Activated CD4-positive, alpha-beta T cell treated with anti-CD3 and anti-CD28 coated beads for 36 hours (primary cell): ENCODE measurements at regions of chrX and their contacts with region 1.

Region 1: DNA sequence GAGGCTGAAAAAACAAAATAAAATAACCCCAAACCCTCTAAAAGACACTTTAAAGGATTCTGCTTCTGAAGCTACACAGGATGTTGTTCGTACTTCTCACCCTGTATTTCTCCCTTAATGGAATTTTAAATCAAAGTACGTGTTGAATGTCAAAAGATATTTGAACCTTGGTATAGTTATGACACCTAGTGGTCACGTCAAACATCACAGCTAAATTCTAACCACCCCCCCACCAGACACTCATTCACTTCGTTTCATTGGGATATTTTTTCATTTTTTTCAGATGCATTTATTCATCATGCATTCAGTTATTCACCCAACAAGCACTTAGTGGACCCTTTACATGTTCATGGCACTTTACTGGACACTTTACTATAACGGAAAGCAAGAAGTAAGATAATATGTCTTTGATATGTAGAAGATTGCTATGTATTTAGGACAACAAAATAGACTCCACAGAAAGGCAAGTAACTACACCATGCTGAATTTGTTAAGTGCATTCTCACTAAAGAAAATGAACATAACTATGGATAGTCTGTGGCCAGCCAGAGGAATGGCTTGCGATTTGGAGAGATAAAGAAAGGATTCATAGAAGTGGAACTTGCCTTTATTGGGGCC is 62.5 kb upstream of the GPR174 start:
- DNase-seq: peak; percentile 29
- ATAC-seq: peak; percentile 53
- H3K4me3 Mint-ChIP-seq: peak overlapping the region; percentile 47
- H3K27ac Mint-ChIP-seq: peak overlapping the region; percentile 71
- H3K4me1 Mint-ChIP-seq: peaks cover 37% of the 10 kb centered on the region
- H3K27me3 Mint-ChIP-seq: no peaks in the 10 kb centered on the region

Region 2: DNA sequence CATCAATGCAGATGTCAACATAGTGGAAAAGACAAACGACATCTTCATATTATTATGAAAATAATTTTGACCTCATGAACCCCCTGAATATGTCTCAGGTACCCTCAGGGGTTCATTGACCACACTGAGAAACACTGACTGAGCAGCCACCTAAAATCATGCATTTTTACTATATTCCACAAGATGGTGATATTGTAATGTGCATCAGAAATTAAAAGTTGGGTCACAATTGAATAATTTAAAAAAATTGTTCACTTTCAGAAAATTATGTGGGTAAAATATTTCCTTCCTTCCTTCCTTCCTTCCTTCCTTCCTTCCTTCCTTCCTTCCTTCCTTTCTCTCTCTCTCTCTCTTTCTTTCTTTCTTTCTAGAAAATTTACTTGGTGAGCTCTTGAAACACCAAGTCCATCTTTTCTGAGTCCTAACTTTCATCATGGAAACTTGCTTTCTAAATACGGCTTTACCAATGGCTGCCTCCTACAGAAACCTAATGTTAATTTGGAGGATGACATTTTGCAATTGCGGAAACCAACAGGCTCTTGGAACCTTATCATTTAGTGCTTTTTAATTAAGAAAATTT is 526.5 kb before region 1 on chrX:
- CTCF ChIA-PET with region 1: interaction called, 10 read pairs
- POLR2A ChIA-PET with region 1: interaction called, 3 read pairs
- intact Hi-C with region 1: loop called (anchors 1 to 2 kb)
- DNase-seq: no peak
- ATAC-seq: no peak
- H3K4me3 Mint-ChIP-seq: no peak overlapping the region
- H3K27ac Mint-ChIP-seq: no peak overlapping the region
- H3K4me1 Mint-ChIP-seq: peaks cover 2% of the 10 kb centered on the region
- H3K27me3 Mint-ChIP-seq: no peaks in the 10 kb centered on the region

Region 3: DNA sequence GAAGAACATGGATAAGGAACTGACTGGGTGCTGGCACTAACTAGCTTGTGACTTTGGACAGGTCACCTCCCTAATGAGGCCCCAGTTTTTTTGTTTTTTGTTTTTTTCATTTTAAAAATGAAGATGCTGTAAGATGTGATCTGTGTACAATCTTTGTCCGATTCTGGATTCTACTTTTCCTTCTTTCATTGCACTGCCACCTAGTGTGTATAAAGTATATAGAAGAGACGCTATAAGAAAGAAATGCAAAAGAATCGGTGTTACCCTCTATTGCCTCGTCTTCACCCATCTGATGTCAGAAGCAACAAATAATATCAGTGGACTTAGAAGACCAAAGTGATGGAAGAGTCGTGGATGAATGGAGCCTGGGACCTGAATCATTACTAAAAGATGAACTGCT is 195.5 kb before region 1 on chrX:
- CTCF ChIA-PET with region 1: no interaction called
- POLR2A ChIA-PET with region 1: no interaction called
- intact Hi-C with region 1: loop called in 1 of 2 experiments (anchors 5 kb)
- DNase-seq: no peak
- ATAC-seq: peak; percentile 61
- H3K4me3 Mint-ChIP-seq: no peak overlapping the region
- H3K27ac Mint-ChIP-seq: peak overlapping the region; percentile 47
- H3K4me1 Mint-ChIP-seq: peaks cover 7% of the 10 kb centered on the region
- H3K27me3 Mint-ChIP-seq: no peaks in the 10 kb centered on the region

Region 4: GRCh38 chrX:78979789-78980464 is 102.1 kb before region 1 on chrX:
- CTCF ChIA-PET with region 1: no interaction called
- POLR2A ChIA-PET with region 1: no interaction called
- intact Hi-C with region 1: loop called in 1 of 2 experiments (anchors 5 kb)
- DNase-seq: peak; percentile 30
- ATAC-seq: peak; percentile 93
- H3K4me3 Mint-ChIP-seq: peak overlapping the region; percentile 60
- H3K27ac Mint-ChIP-seq: peak overlapping the region; percentile 94
- H3K4me1 Mint-ChIP-seq: peaks cover 20% of the 10 kb centered on the region
- H3K27me3 Mint-ChIP-seq: no peaks in the 10 kb centered on the region

Region 5: DNA sequence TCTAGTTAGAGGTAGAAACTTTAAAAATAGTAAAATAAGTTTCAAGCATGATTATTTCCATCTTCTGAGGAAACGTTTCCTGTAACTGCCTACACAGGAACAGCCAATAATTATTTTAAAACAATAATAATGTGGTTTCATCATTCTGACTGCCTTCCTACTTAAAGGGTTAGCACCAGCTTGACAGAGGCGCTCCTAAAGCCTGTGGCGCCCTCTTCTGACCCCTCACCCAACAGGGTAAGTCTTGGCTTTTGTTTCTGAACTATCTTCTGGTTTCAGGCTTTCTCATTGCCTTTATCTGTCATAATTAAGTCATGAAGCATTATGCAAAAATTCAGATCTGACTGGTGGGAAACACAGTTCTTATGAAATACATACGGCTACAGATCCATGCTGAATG is 188.4 kb after region 1 on chrX:
- CTCF ChIA-PET with region 1: interaction called, 5 read pairs
- POLR2A ChIA-PET with region 1: no interaction called
- intact Hi-C with region 1: loop called (anchors 1 to 2 kb)
- DNase-seq: peak; percentile 87
- ATAC-seq: peak; percentile 99
- H3K4me3 Mint-ChIP-seq: no peak overlapping the region
- H3K27ac Mint-ChIP-seq: peak overlapping the region; percentile 47
- H3K4me1 Mint-ChIP-seq: peaks cover 44% of the 10 kb centered on the region
- H3K27me3 Mint-ChIP-seq: no peaks in the 10 kb centered on the region